HepG2 (cell line): ENCODE measurements at regions of chr10 and their contacts with region 1.

Region 1: GRCh38 chr10:70272925-70273316 is 10.9 kb downstream of the NPFFR1 start:
- DNase-seq: no peak
- ATAC-seq: peak; percentile 70
- H3K4me3 ChIP-seq: no peak overlapping the region
- H3K27ac ChIP-seq: no peak overlapping the region
- H3K4me1 ChIP-seq: peaks cover 7% of the 10 kb centered on the region
- H3K27me3 ChIP-seq: peaks cover 0 to 18% of the 10 kb centered on the region in 2 experiments; a peak in 1 of 5 replicates
- CTCF ChIP-seq: peak; percentile 25; the same call in 1 of the 2 replicates
- EP300 ChIP-seq: no peak
- POLR2A ChIP-seq: no peak
- RAD21 ChIP-seq: no peak

Region 2: GRCh38 chr10:70063418-70064098 is 209.4 kb before region 1 on chr10:
- CTCF ChIA-PET with region 1: no interaction called
- POLR2A ChIA-PET with region 1: no interaction called
- in situ Hi-C with region 1: no loop called
- intact Hi-C with region 1: no loop called
- DNase-seq: no peak
- ATAC-seq: no peak
- H3K4me3 ChIP-seq: no peak overlapping the region
- H3K27ac ChIP-seq: no peak overlapping the region
- H3K4me1 ChIP-seq: no peaks in the 10 kb centered on the region
- H3K27me3 ChIP-seq: no peaks in the 10 kb centered on the region
- CTCF ChIP-seq: no peak
- EP300 ChIP-seq: no peak
- POLR2A ChIP-seq: no peak
- RAD21 ChIP-seq: no peak

Region 3: GRCh38 chr10:70221030-70221429 is 51.9 kb before region 1 on chr10:
- CTCF ChIA-PET with region 1: no interaction called
- POLR2A ChIA-PET with region 1: no interaction called
- in situ Hi-C with region 1: no loop called
- intact Hi-C with region 1: no loop called
- DNase-seq: no peak
- ATAC-seq: no peak
- H3K4me3 ChIP-seq: no peak overlapping the region
- H3K27ac ChIP-seq: peak overlapping the region; percentile 15
- H3K4me1 ChIP-seq: peaks cover 25% of the 10 kb centered on the region
- H3K27me3 ChIP-seq: no peaks in the 10 kb centered on the region; a peak in 1 of 5 replicates
- CTCF ChIP-seq: no peak
- EP300 ChIP-seq: no peak
- POLR2A ChIP-seq: no peak
- RAD21 ChIP-seq: no peak

Region 4: DNA sequence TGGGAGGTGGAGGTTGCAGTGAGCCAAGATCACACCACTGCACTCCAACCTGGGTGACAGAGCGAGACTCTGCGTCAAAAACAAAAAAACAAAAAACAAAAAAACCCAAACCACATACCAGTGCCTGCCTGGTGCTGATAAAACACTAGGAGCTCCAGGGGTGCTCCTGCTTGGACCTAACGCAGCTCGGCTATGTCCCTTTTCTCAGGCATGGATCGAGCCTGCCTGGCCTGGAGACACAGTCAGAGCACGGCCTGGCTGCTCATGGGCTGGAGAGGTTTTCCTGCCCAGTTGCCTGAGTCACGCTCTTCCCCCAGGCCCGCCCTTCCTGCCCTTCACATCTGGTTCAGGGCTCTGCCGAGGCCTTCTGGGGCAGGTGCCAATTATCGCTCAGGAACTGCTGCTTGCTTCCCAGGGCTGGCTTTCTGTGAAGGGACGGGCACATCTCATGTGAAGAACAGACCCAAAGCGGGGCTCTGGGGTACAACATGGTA is 23.5 kb after region 1 on chr10:
- CTCF ChIA-PET with region 1: no interaction called
- POLR2A ChIA-PET with region 1: no interaction called
- in situ Hi-C with region 1: no loop called
- intact Hi-C with region 1: no loop called
- DNase-seq: no peak
- ATAC-seq: peak; percentile 77
- H3K4me3 ChIP-seq: no peak overlapping the region
- H3K27ac ChIP-seq: no peak overlapping the region
- H3K4me1 ChIP-seq: no peaks in the 10 kb centered on the region
- H3K27me3 ChIP-seq: no peaks in the 10 kb centered on the region
- CTCF ChIP-seq: no peak
- EP300 ChIP-seq: no peak
- POLR2A ChIP-seq: no peak
- RAD21 ChIP-seq: no peak

Region 5: DNA sequence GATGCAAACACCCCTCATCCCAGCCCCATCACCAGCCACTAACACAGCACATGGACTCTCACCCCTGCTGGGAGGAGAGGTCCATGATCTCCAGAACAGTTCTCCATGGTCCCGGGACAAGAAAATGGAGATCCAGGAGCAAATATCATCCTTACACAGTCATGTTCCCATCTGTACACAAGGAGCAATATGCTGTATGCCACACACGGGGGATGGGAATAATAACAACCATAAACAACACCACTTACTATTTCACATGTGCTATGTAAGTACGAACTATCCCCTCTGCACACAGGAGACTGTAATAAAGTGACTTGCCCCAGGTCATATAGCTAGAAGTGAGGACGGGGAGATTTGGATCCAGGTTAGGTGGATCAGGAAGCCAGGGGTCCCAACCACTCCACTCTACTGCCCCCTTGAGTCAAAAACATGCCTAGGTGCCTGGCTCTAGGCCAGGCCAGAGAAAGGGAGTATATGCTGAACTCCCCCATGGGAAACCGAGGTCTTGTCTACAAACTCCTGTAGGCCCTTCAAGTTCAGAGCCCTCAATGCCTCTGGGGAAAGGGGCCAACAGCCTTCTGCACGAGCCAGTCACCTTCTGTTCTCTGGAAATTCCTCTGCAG is 75.4 kb after region 1 on chr10:
- CTCF ChIA-PET with region 1: no interaction called
- POLR2A ChIA-PET with region 1: no interaction called
- in situ Hi-C with region 1: no loop called
- intact Hi-C with region 1: loop called (anchors 2 kb)
- DNase-seq: no peak
- ATAC-seq: peak; percentile 52
- H3K4me3 ChIP-seq: no peak overlapping the region
- H3K27ac ChIP-seq: no peak overlapping the region
- H3K4me1 ChIP-seq: peaks cover 58% of the 10 kb centered on the region
- H3K27me3 ChIP-seq: no peaks in the 10 kb centered on the region
- CTCF ChIP-seq: peak; percentile 77
- EP300 ChIP-seq: no peak
- POLR2A ChIP-seq: no peak
- RAD21 ChIP-seq: peak; percentile 54; the same call in 1 of the 2 replicates

Region 6: DNA sequence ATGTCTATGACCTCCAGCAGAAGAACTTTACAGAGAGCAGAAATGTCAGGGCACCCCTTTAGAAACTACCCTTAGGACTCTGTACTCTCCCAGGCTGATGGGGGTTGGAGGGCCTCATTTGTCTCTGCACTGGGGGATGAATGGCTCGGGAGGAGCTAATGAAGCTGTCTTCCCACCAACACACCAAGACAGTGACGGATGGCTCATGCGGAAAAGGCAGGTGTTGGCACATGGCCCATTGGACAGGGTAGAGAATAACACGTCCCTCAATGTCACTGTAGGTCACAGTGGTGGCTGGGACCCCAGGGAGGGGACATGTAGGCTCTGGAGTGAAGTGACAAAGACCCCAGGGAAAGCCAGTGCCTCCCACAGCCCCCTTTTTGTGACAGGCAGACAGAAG is 679.5 kb after region 1 on chr10:
- CTCF ChIA-PET with region 1: no interaction called
- POLR2A ChIA-PET with region 1: no interaction called
- in situ Hi-C with region 1: no loop called
- intact Hi-C with region 1: no loop called
- DNase-seq: no peak
- ATAC-seq: no peak
- H3K4me3 ChIP-seq: no peak overlapping the region
- H3K27ac ChIP-seq: no peak overlapping the region
- H3K4me1 ChIP-seq: no peaks in the 10 kb centered on the region
- H3K27me3 ChIP-seq: peaks cover 2 to 6% of the 10 kb centered on the region in 2 experiments; a peak in 2 of 5 replicates
- CTCF ChIP-seq: no peak
- EP300 ChIP-seq: no peak
- POLR2A ChIP-seq: no peak
- RAD21 ChIP-seq: no peak